ENCODE measurements at regions of chr1 and their contacts with region 1.

Region 1: DNA sequence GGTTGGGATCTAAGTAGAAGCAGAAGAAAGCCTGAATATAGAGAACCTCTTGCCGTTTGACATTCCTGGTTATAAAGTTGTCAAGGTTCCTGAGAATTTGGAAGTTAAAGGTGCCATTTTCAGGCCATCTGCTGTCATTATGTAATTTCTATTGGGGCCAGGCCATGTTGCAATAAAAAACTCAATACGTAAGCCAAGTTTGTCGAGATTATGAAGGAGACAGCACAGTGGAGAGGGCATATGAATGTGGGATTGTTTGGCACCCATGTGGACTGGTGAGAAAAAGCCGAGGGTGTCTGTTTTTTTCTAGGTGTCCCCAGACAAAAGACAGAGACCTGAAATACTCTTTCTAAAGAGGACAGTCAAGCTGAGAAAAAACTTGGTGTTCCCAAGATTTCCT is 18.8 kb upstream of the HSD3B1 start:
- DNase-seq: no peak
- ATAC-seq: no peak
- H3K4me3 ChIP-seq: no peak overlapping the region
- H3K27ac ChIP-seq: no peak overlapping the region
- H3K4me1 ChIP-seq: peaks cover 0 to 5% (median 0%) of the 10 kb centered on the region in 12 donors
- H3K27me3 ChIP-seq: no peaks in the 10 kb centered on the region
- CTCF ChIP-seq: no peak
- POLR2A ChIP-seq: no peak

Region 2: GRCh38 chr1:119435052-119435451 is 53.2 kb before region 1 on chr1:
- intact Hi-C with region 1: loop called in 1 of 10 experiments (anchors 5 kb)
- DNase-seq: no peak
- ATAC-seq: no peak
- H3K4me3 ChIP-seq: no peak overlapping the region
- H3K27ac ChIP-seq: no peak overlapping the region
- H3K4me1 ChIP-seq: no peaks in the 10 kb centered on the region
- H3K27me3 ChIP-seq: peaks cover 0 to 7% (median 0%) of the 10 kb centered on the region in 9 donors
- CTCF ChIP-seq: no peak
- POLR2A ChIP-seq: no peak

Region 3: DNA sequence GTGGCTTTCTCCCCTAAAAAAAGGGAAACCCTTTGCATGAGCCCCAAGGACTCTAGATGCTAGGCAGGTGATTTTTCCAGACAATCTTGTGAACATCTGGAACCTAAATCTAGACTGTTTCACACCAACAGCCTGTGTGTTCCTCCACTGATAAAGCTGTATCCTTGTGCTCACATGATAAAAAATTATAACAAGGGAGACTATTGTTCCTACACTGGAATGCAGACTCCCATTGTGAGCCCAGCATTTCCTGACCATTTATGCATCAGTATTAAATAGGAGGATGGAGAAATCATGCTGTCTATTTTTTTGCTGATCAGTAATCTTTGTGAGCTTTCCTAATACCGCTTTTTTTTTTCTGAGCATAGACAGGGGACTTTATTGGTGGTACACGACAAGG is 107.4 kb after region 1 on chr1:
- intact Hi-C with region 1: no loop called
- DNase-seq: no peak
- ATAC-seq: no peak
- H3K4me3 ChIP-seq: no peak overlapping the region
- H3K27ac ChIP-seq: no peak overlapping the region
- H3K4me1 ChIP-seq: peaks cover 0 to 5% (median 0%) of the 10 kb centered on the region in 12 donors
- H3K27me3 ChIP-seq: no peaks in the 10 kb centered on the region
- CTCF ChIP-seq: no peak
- POLR2A ChIP-seq: no peak

Measured in heart left ventricle (tissue), 16 donors.